AG04449 (cell line): ENCODE measurements at regions of chr3 and their contacts with region 1.

Region 1: DNA sequence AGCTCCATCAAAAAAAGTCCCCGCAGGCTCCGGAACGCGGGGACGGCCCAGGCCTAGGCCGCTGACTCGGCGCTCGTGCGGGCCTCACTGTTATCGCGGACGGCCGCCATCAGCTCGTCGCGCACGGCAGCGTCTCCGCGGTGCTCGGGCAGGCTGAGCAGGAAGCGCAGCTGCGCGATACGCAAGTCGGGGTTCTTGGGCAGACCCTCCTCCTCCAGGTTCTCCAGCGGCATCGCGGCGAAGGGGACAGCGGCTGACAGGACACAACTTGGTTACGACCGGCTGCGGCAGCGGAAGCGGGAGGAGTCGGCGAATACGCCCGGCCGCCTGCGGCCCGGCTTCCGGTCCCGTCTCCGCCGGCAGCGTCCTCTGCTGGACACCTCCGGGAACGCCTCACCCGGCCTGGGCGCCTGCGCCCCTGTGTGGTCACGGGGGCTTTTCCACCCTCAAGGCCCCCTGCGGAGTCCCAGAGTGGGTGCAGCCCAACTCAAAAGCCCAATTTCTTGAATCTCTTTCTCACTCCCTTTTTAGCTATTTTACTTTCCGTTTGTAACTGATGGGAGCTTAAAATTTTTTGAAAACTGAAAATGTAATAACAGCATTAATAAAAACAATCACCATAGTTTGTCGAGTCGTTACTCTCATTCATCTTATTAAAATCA is at the start of gene PSMD6:
- DNase-seq: no peak
- H3K4me3 ChIP-seq: peak within 1 kb of the TSS; percentile 98
- CTCF ChIP-seq: peak; percentile 100

Region 2: GRCh38 chr3:63746211-63746610 is 277.1 kb before region 1 on chr3:
- CTCF ChIA-PET with region 1: no interaction called
- POLR2A ChIA-PET with region 1: no interaction called
- DNase-seq: no peak
- H3K4me3 ChIP-seq: no peak overlapping the region
- CTCF ChIP-seq: no peak

Region 3: GRCh38 chr3:63900459-63900858 is 122.9 kb before region 1 on chr3:
- CTCF ChIA-PET with region 1: no interaction called
- POLR2A ChIA-PET with region 1: no interaction called
- DNase-seq: no peak
- H3K4me3 ChIP-seq: no peak overlapping the region
- CTCF ChIP-seq: no peak

Region 4: GRCh38 chr3:63984391-63984790 is 38.9 kb before region 1 on chr3:
- CTCF ChIA-PET with region 1: no interaction called
- POLR2A ChIA-PET with region 1: no interaction called
- DNase-seq: no peak
- H3K4me3 ChIP-seq: no peak overlapping the region
- CTCF ChIP-seq: no peak

Region 5: GRCh38 chr3:64039981-64040733 is 16.8 kb after region 1 on chr3:
- CTCF ChIA-PET with region 1: interaction called, 27 read pairs
- POLR2A ChIA-PET with region 1: no interaction called
- DNase-seq: no peak
- H3K4me3 ChIP-seq: no peak overlapping the region
- CTCF ChIP-seq: no peak

Region 6: GRCh38 chr3:64184621-64185020 is 161.3 kb after region 1 on chr3:
- CTCF ChIA-PET with region 1: interaction called, 13 read pairs
- POLR2A ChIA-PET with region 1: no interaction called
- DNase-seq: no peak
- H3K4me3 ChIP-seq: no peak overlapping the region
- CTCF ChIP-seq: no peak

Region 7: DNA sequence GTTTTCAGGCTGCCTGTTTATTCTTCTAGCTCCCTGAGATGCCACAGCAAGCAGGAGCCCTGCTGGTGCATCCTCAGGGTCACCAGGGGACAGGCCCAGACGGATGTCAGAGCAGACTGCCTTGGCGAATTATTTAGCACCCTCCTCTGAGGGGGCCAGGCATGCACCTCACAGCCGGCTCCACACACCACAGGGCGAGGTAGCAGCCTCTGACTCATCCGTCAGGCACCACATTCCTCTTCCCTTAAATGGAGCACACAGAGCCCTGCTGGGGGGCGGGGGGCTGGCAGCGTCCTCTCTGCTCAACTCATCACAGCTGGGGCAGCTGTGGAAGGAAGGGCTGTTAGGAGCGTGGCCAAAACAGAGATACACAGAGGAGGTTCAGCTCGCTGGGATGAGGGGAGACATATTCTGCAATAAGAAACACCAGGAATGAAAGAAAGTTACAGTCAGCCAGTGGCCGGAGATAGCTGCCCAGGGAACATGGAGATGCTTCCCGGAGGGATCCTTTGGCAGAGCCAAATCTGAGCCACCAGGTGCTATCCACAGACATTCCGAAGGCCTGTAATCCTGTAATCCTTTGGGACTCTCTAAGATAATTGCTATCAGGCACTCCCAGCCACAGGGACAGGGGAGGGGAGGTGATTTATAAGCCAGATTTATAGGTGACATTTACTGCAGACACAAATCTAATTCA is 215.8 kb after region 1 on chr3:
- CTCF ChIA-PET with region 1: interaction called, 11 read pairs
- POLR2A ChIA-PET with region 1: no interaction called
- DNase-seq: peak; percentile 87
- H3K4me3 ChIP-seq: peak overlapping the region; percentile 34
- CTCF ChIP-seq: no peak

Region 8: DNA sequence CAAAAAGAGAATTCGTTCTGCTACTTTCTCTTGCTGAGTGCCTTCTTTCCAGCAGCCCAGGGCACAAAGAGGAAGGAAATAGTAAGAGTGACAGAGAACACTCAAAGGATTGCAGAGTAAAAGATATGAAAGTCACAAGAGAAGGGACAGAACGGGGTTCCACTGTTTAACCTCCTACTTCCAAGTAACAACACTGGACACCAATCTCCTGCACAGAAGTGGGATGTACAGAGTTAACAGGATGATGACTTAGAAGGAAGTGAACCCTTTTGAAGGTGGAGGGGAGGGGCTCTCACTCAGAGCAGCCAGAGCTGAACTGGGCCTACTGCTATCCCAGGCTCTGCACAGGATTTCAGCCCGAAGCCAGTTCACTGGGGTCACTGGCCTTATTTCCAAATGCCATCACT is 332.1 kb after region 1 on chr3:
- CTCF ChIA-PET with region 1: interaction called, 13 read pairs
- POLR2A ChIA-PET with region 1: no interaction called
- DNase-seq: no peak
- H3K4me3 ChIP-seq: no peak overlapping the region
- CTCF ChIP-seq: no peak

Region 9: GRCh38 chr3:64462203-64462602 is 438.9 kb after region 1 on chr3:
- CTCF ChIA-PET with region 1: interaction called, 35 read pairs
- POLR2A ChIA-PET with region 1: no interaction called
- DNase-seq: peak; percentile 79
- H3K4me3 ChIP-seq: peak overlapping the region; percentile 28
- CTCF ChIP-seq: no peak

Region 10: GRCh38 chr3:64484289-64484992 is 461.1 kb after region 1 on chr3:
- CTCF ChIA-PET with region 1: interaction called, 323 read pairs
- POLR2A ChIA-PET with region 1: no interaction called
- DNase-seq: no peak
- H3K4me3 ChIP-seq: no peak overlapping the region
- CTCF ChIP-seq: peak; percentile 83